Right ventricle myocardium superior (tissue), 1 donor: ENCODE measurements at regions of chr7 and their contacts with region 1.

Region 1: DNA sequence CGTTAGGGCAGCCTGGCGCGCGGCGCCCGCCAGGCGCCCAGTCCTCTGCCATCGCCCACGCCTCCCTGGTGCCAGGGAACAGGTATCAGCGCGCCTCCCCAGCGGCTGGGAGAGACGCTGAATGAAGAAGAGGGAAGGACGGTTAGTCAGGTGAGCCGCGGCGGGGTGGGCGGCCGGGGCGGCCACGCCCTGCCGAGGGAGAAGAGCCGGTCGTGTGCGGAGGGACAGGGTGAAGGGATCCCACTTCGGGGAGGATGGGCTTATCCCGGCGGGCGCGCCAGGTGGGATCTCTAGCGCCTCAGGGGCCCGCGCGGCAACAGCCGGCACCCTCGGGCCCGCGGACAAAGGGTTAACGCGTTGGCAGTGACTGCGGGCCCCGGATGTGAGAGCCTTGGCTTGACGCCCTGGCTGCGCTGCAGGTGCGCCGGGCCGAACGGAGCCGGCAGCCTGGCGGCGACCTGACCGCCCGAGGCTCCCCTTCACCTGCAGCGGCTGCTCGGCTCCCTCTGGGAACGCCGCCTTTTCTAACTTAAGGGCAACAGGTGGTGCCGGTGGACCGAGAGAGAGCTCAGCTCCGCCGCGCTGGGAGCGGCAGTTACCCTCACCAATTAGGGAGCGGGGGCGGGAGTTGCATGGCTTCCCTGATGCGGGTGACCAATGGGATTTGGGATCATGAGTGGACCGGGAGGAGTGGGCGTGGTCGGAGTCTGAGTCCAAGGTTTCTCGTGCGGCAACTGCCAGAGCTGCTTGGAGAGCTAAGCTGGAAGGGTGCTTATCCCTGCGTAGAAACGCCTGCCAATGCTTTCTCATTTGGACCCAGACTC is at the start of gene ARL4A:
- DNase-seq: peak; percentile 99
- ATAC-seq: peak; percentile 95
- total RNA-seq, gene ARL4A: 10.9 TPM

Region 2: GRCh38 chr7:12729112-12729511 is 42.0 kb after region 1 on chr7:
- intact Hi-C with region 1: loop called (anchors 5 kb)
- DNase-seq: peak; percentile 87
- ATAC-seq: peak; percentile 84

Region 3: DNA sequence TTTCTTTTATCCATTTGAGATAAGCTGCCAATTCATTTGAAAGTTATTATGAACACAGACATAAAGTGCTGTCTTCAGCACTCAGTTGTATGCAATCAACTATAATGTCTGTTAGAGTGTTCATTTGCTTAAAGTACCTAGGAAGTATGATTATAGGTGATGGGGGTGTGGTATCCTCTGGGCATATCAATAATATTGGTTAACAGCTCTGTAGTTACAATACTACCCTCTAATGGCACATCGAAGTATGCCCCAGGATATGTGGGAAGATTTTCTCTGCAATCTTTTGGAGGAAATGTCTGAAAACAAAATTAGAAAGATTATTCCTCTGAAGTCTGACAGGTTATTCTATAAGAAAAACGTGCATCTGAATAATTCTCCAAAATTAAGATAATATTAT is 430.0 kb after region 1 on chr7:
- intact Hi-C with region 1: loop called (anchors 10 kb)
- DNase-seq: no peak
- ATAC-seq: no peak

Region 4: DNA sequence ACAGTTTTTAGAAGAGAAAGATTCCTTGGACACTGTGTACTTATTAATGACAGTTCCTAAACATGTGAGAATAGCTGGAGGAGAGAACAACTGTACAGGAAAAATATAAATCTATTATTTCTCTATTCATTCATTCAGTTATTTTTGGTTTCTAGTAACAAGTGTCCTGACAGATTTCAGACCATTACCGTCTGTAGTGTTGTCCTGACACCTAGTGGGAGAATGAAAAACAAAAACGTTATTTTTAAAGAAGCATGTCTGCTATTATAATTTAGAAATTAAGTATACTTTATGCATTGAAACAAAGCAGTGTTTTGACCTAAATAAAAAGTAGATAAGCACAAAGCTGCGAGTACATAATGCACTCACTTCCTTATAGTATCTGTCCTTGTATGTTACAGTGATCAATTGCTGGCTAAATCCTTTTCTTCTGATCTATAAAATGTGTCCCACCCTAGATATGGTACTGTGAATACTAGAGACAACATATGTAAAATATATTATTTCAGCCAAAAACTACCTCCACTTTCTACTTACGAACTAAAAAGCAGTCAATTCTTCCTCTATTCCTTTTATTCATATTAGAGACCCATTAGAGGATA is 575.9 kb after region 1 on chr7:
- intact Hi-C with region 1: loop called (anchors 5 kb)
- DNase-seq: no peak
- ATAC-seq: peak; percentile 68